Dendritic cell treated with granulocyte-macrophage colony-stimulating factor and Interleukin-4, amounts not matched to agents 40 ng/mL and 50 ng/mL, for 4 days (primary cell): ENCODE measurements at regions of chrX and their contacts with region 1.

Region 1: DNA sequence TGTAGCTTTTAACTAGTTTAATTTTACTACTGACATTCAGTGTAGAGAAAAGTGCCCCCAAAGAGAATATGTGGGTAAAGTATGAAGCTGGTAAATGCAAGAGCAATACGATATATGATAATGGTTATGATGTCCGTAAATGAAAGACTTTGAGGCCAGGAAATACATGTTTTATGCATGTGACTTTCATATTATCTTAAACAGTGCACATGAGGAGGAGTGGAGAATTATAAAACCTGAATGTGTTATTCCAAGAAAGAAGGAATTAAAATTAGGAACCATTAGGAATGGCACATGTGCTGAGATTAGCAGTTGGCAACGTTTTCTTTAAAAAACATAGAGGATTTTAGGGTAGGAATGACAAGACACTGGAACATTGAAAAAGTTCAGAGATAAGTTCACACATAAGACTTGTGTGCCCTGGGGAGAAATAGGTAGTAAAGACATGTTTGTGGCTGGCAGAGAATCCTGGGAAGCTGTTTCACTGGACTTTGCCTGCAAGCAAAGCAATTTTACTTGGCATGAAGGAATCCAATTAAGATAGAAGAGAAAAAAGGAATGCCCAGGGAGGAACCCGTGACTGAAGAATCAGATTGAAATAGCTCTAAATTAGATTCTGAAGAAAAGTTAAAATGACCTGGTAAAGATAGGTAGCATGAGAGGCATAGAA is 20.0 kb downstream of the GK start:
- H3K4me3 Mint-ChIP-seq: no peak overlapping the region
- H3K27ac Mint-ChIP-seq: no peak overlapping the region
- H3K4me1 Mint-ChIP-seq: no peaks in the 10 kb centered on the region
- H3K27me3 Mint-ChIP-seq: no peaks in the 10 kb centered on the region

Region 2: GRCh38 chrX:30635630-30636029 is 37.6 kb before region 1 on chrX:
- intact Hi-C with region 1: loop called (anchors 5 kb)
- H3K4me3 Mint-ChIP-seq: no peak overlapping the region
- H3K27ac Mint-ChIP-seq: no peak overlapping the region
- H3K4me1 Mint-ChIP-seq: peaks cover 13% of the 10 kb centered on the region
- H3K27me3 Mint-ChIP-seq: no peaks in the 10 kb centered on the region

Region 3: GRCh38 chrX:30735839-30736238 is 62.6 kb after region 1 on chrX:
- intact Hi-C with region 1: no loop called
- H3K4me3 Mint-ChIP-seq: no peak overlapping the region
- H3K27ac Mint-ChIP-seq: no peak overlapping the region
- H3K4me1 Mint-ChIP-seq: no peaks in the 10 kb centered on the region
- H3K27me3 Mint-ChIP-seq: no peaks in the 10 kb centered on the region